Mammary epithelial cell (primary cell): ENCODE measurements at regions of chr1 and their contacts with region 1.

Region 1: DNA sequence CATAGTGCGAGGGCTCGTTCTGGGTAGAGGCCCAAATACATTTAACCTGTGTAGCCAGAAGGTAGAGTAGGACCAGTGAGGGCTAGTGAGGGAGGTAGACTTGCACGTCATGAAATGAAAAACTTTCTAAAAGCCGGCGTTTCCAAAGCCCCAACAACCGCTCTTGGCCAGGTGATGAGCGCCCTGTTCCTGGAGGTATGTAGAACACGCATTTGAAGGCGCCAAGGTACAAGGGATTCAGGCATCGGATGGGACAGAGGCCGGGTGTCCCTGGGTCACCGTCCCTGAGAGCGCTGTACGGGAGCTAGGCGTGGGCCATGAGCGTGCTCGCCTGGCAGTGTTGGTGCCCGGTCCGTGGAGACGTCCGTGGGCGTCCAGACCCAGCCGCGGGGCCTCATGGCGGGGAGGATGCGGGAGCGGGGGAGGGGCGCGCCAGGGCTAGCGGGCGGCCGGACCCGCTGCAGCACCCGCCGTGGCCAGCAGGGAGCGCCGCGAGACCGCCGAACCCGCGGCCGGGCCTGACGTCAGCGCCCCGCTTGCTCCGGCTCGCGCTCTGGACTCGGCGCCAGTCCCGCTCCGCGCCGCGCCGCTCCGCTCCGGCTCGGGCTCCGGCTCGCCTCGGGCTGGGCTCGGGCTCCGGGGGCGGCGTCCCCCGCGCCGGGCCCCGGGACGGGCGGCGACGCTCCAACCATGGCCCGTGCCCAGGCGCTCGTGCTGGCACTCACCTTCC is at the start of gene PTPRU:
- DNase-seq: peak; percentile 69
- H3K4me3 ChIP-seq: peak within 1 kb of the TSS; percentile 56 to 83 (median 71)
- H3K27ac ChIP-seq: peak within 1 kb of the TSS; percentile 66
- H3K4me1 ChIP-seq: peaks cover 32% of the 10 kb centered on the region
- H3K27me3 ChIP-seq: no peaks in the 10 kb centered on the region
- CTCF ChIP-seq: peak; percentile 27 to 50
- total RNA-seq, gene PTPRU: 38.9 to 46.3 TPM

Region 2: GRCh38 chr1:29324771-29325668 is 88.9 kb after region 1 on chr1:
- CTCF ChIA-PET with region 1: no interaction called
- dilution Hi-C with region 1: loop called (anchors 5 kb)
- in situ Hi-C with region 1: no loop called
- intact Hi-C with region 1: no loop called
- DNase-seq: no peak
- H3K4me3 ChIP-seq: no peak overlapping the region
- H3K27ac ChIP-seq: no peak overlapping the region
- H3K4me1 ChIP-seq: no peaks in the 10 kb centered on the region
- H3K27me3 ChIP-seq: no peaks in the 10 kb centered on the region
- CTCF ChIP-seq: no peak

Region 3: GRCh38 chr1:29453502-29454240 is 217.6 kb after region 1 on chr1:
- CTCF ChIA-PET with region 1: no interaction called
- dilution Hi-C with region 1: no loop called
- in situ Hi-C with region 1: loop called in 1 of 2 experiments (anchors 25 kb)
- intact Hi-C with region 1: loop called (anchors 1 kb)
- DNase-seq: peak; percentile 15
- H3K4me3 ChIP-seq: no peak overlapping the region
- H3K27ac ChIP-seq: no peak overlapping the region
- H3K4me1 ChIP-seq: no peaks in the 10 kb centered on the region
- H3K27me3 ChIP-seq: no peaks in the 10 kb centered on the region
- CTCF ChIP-seq: peak; percentile 28 to 43

Region 4: GRCh38 chr1:29708901-29709710 is 473.0 kb after region 1 on chr1:
- CTCF ChIA-PET with region 1: no interaction called
- dilution Hi-C with region 1: loop called (anchors 25 kb)
- in situ Hi-C with region 1: loop called (anchors 25 kb)
- intact Hi-C with region 1: loop called (anchors 1 kb)
- DNase-seq: peak; percentile 86
- H3K4me3 ChIP-seq: no peak overlapping the region
- H3K27ac ChIP-seq: peak overlapping the region; percentile 85
- H3K4me1 ChIP-seq: peaks cover 58% of the 10 kb centered on the region
- H3K27me3 ChIP-seq: no peaks in the 10 kb centered on the region
- CTCF ChIP-seq: no peak

Region 5: DNA sequence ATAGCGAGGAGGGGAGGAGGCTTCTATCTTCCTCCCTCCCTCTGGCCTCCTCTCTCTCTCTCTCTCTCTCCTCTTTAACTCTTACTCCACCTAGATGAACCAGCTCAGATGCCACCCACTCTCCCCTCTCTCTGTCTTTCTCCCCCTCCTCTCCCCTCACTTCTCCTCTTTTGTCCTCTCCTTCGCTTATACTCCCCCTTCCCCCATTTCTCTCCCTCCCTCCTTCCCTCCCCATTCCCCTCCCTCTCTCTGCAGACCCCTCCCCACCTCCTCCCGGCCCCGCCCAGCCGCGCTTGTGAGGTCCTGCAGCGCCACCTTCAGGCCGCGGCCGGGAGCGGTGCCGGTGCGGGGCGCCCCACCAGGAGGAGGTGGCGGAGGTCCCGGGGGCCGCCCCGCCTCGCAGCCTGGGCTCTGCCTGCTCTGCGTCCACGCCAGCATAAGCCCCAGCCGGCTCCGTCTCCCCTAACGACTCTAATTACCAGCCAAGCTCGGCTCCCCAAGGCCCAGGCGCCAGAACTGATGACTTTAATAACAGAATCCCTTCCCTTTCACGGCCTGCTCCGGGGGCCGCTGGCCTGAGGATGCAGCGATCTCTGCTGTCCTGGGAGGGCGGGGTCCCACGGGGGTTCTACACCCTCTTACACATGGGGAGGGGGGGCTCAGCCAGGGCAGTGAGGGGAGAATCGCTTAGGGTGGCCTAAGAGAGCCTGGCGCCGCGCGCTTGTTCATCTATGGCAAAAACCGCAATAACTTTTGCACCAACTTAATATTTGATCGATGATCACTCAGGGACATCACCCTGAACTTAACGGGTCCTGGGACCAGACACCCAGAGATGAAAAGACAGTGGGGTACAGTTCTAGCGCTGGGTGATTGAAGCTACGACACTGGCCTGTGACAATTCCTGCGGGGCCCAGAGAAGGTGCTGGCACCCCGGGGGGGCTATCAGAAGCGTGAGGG is 850.0 kb after region 1 on chr1:
- CTCF ChIA-PET with region 1: no interaction called
- dilution Hi-C with region 1: no loop called
- in situ Hi-C with region 1: loop called in 1 of 2 experiments (anchors 25 kb)
- intact Hi-C with region 1: loop called (anchors 2 kb)
- DNase-seq: no peak
- H3K4me3 ChIP-seq: no peak overlapping the region
- H3K27ac ChIP-seq: no peak overlapping the region
- H3K4me1 ChIP-seq: peaks cover 14% of the 10 kb centered on the region
- H3K27me3 ChIP-seq: no peaks in the 10 kb centered on the region
- CTCF ChIP-seq: peak; percentile 38 to 73

Region 6: DNA sequence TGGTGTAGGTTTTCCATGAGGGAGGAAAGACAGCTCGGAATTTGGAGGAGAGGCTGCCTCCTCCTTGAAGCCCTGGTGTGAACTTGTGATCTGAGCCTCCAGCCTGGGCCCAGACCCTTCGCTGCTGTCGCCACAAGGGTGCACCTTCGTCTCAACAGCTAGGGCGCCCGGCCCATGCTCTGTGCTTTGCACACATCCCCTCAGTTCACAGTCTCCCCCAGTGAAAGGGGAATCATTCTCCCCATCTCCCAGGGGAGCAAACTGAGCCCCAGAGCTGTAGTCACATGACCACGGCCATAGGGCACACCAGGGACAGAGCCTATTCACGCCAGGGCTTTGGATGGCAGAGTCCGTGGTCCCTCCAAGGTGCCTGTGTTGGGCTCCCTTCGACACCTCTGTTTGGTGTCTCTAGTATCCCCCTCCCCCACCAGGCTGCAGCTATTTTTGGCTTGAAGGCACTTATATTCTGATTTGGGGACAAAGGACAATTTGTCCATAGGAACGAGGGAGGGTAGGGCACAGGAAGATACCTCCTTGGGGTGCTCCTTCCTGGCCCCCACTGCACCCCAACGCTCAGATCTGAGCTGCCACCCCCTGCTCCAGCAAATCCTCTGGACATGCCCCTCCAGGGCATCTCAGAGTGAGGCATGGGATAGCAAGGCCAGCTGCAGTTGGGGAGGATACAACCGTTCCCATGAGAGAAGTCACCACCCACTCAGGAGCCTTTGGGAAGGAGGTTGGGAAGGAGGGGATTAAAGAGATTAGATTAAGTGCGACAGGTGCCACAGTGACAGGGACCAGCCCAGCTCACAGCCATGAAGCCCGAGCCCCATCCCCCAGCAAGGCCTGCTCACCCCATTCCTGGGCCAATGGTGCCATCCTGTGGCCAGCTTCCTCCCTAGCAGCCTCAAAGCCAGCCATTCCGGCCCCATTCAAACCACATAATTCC is 1471.6 kb after region 1 on chr1:
- CTCF ChIA-PET with region 1: no interaction called
- dilution Hi-C with region 1: no loop called
- in situ Hi-C with region 1: loop called (anchors 10 to 25 kb)
- intact Hi-C with region 1: loop called (anchors 1 kb)
- DNase-seq: peak; percentile 49
- H3K4me3 ChIP-seq: no peak overlapping the region
- H3K27ac ChIP-seq: no peak overlapping the region
- H3K4me1 ChIP-seq: peaks cover 11% of the 10 kb centered on the region
- H3K27me3 ChIP-seq: no peaks in the 10 kb centered on the region
- CTCF ChIP-seq: peak; percentile 93 to 98